Posterior cingulate gyrus (tissue), 11 donors: ENCODE measurements at regions of chr4 and their contacts with region 1.

Region 1: GRCh38 chr4:76515975-76516843 is 81.2 kb downstream of the SHROOM3 start:
- DNase-seq: no peak

Region 2: GRCh38 chr4:76748649-76749048 is 232.4 kb after region 1 on chr4:
- intact Hi-C with region 1: loop called (anchors 2 kb)
- DNase-seq: peak in 1 of 10 donors; percentile 58

Region 3: DNA sequence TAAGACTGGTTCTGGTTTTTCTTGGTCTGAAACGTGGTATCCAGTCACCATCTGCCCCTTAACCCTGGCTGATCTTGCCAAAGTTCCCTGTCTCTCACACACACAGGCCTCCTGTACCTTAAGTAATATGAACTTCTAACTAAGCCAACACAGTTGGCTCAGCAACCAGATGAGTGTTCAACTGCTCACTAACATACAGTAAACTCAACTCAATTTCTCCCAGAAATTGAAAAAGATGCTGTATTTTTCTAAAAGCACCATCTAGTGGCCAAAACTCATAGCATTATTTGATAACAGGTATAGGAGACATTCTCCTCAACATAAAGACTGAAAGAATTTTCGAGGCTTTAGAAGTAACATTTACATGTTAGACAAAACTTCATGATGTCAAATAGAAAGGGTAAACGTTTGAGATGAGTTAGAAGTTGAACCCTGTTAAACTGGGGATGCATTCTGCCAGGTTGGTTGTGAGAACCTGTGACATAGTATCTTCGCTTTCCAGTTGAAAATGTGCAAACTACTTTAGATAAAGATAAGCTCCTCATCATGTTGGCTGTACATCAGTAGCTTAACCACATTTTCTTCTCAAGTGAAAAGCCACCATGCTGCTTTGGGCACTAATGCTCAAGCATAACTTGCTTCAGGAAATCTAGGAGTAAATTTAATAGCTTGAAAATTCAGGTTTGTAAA is 528.4 kb after region 1 on chr4:
- intact Hi-C with region 1: loop called (anchors 10 kb)
- DNase-seq: no peak

Region 4: DNA sequence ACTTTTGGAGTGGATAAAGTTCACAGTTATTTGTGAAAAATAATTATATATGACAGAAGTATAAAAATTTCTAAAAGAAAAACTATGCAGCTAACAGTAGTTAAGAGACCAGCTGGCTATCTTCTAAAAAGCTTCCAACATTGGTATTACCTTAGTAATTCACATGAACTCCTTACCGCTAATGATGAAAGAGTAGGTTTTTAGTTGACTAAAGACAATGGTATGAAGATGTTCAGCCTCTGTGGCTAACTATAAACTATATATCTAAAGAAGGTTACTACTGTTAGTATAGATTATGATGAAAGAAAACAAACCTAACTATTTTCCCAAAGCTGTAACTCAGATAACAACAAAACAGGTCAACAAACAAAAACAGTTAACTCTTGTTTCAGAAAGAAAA is 549.2 kb after region 1 on chr4:
- intact Hi-C with region 1: no loop called
- DNase-seq: no peak